Gastrocnemius medialis (tissue), 4 donors: ENCODE measurements at regions of chr11 and their contacts with region 1.

Region 1: DNA sequence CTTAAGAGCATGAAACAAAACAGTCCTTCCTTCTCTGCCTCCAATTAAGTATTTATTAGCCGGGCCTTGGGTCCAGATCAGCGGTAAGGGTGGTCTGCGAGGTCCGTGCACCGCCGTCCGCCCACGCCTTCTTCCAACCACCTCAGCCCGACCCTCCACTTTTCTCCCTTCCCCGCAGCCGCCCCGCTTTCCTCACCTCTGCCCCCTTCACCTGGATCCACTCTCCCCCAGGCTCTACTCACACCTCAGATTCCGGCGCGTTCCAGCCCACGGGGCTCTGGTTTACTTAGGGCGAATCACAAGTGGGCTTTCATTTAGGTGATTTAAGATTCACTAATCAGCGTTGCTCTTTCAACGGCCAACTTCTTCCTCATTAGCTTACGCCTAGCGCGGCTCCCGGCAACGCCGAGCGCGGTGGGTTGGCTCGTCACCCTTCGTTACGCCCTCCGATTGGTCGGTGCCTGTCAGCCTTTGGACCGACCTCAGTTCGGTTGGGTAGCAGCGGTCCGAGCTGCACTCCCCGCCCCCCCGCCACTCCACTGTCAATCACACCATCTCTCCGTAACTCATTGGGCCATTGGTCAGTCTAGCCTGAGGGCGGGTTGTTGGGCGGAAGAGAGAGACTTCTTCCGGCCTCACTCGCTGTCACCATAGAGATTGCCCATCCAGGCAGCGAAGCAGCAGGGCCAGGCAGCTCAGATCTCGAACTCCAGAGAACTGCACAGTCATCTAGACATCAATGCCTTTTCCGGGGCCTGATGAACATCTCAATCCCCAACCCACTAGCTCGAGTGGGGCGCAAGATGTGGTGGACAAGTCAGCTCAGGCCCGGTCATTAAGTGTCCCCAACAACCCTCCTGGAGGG is at the start of gene TMEM218:
- DNase-seq: peak; percentile 99
- ATAC-seq: peak; percentile 98 to 99
- H3K4me3 ChIP-seq: peak within 1 kb of the TSS; percentile 86 to 97 (median 92)
- H3K27ac ChIP-seq: peak within 1 kb of the TSS; percentile 82 to 86 (median 84)
- H3K4me1 ChIP-seq: peaks cover 11 to 15% of the 10 kb centered on the region in 2 donors
- H3K27me3 ChIP-seq: peaks cover 0 to 3% (median 0%) of the 10 kb centered on the region in 3 donors
- CTCF ChIP-seq: no peak
- POLR2A ChIP-seq: no peak
- total RNA-seq, gene TMEM218: 6.3 to 11.2 (median 9.4) TPM

Region 2: GRCh38 chr11:125123947-125124617 is 12.5 kb after region 1 on chr11:
- in situ Hi-C with region 1: no loop called
- intact Hi-C with region 1: loop called (anchors 1 kb)
- DNase-seq: peak; percentile 40 to 82
- ATAC-seq: peak; percentile 99 to 100
- H3K4me3 ChIP-seq: peak overlapping the region; percentile 32 to 49 (median 42)
- H3K27ac ChIP-seq: peak overlapping the region; percentile 19 to 71 (median 64)
- H3K4me1 ChIP-seq: peaks cover 4 to 7% of the 10 kb centered on the region in 2 donors
- H3K27me3 ChIP-seq: peaks cover 2 to 11% (median 5%) of the 10 kb centered on the region in 3 donors
- CTCF ChIP-seq: peak in 4 of 5 experiments; percentile 32 to 61 (median 48)
- POLR2A ChIP-seq: no peak